MCF 10A (cell line): ENCODE measurements at regions of chr3 and their contacts with region 1.

Region 1: GRCh38 chr3:149752051-149752787 is at the start of gene COMMD2:
- DNase-seq: peak; percentile 91
- H3K4me3 Mint-ChIP-seq: peak within 1 kb of the TSS; percentile 84
- H3K27ac Mint-ChIP-seq: peak within 1 kb of the TSS; percentile 87
- H3K4me1 Mint-ChIP-seq: peaks cover 3% of the 10 kb centered on the region
- H3K27me3 Mint-ChIP-seq: no peaks in the 10 kb centered on the region
- CTCF ChIP-seq: peak; percentile 34
- total RNA-seq, gene COMMD2: 51.2 and 60.4 TPM in 2 replicates

Region 2: DNA sequence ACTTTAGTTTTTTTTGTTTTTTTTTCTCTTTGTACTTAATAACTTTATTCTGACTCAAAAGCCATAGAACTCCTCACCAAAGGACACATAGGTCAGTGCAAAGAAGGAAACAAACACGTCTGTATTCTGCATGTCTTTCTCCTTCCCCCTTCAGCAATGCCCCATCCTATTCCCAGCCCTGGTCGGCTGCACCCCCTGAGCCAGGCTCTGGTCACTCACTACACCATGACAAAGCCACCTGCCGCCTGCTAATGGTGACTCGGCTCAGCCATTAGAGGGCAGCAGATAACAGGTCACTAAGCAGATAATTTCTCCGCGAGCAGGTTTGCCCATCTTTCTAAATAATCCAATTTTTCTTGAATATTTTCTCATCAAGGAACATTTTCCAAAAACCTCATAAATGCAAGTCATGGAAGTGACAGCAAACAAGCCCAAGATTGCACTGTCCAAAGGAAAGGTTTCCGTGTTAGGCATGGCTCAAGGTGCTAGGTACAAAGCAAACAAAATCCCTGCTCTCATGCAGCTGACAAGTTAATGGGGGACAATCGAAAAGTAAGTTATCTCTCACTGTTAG is 239.9 kb before region 1 on chr3:
- CTCF ChIA-PET with region 1: interaction called, 3 read pairs
- POLR2A ChIA-PET with region 1: interaction called, 4 read pairs
- intact Hi-C with region 1: loop called (anchors 2 kb)
- DNase-seq: peak; percentile 67
- H3K4me3 Mint-ChIP-seq: no peak overlapping the region
- H3K27ac Mint-ChIP-seq: no peak overlapping the region
- H3K4me1 Mint-ChIP-seq: peaks cover 19% of the 10 kb centered on the region
- H3K27me3 Mint-ChIP-seq: no peaks in the 10 kb centered on the region
- CTCF ChIP-seq: peak; percentile 61

Region 3: GRCh38 chr3:149536429-149536828 is 215.8 kb before region 1 on chr3:
- CTCF ChIA-PET with region 1: interaction called, 16 read pairs
- POLR2A ChIA-PET with region 1: interaction called, 5 read pairs
- intact Hi-C with region 1: no loop called
- DNase-seq: peak; percentile 27
- H3K4me3 Mint-ChIP-seq: peak overlapping the region; percentile 31
- H3K27ac Mint-ChIP-seq: peak overlapping the region; percentile 67
- H3K4me1 Mint-ChIP-seq: peaks cover 48% of the 10 kb centered on the region
- H3K27me3 Mint-ChIP-seq: no peaks in the 10 kb centered on the region
- CTCF ChIP-seq: no peak

Region 4: DNA sequence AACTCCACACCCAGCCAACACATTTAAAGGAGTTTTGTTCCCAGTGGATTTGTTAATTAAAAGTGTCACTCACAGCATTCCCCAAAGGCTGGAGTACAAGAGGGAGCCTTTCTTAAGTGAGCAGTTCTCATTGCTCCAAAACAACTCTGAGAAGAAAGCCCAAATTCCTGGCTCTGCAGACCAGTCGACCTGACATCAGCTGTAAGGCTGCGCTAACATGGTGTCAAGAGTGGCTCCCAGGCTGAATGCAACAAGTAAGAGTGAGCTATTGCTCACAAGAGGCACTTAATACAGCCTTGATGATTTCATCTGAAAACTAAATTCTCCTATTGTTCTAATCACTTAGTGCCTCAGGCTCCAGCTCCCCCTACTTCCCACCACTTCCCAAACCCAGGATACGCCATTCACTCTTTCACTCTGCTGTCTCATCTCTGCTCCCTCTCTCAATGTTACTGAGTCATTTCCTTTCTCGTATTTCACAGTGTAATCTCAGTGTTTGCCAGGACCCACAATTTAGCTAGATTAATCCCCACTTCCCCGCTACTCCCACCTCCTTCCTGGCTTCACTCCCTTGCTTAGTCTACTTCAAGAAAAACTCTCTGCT is 176.2 kb before region 1 on chr3:
- CTCF ChIA-PET with region 1: interaction called, 4 read pairs
- POLR2A ChIA-PET with region 1: interaction called, 10 read pairs
- intact Hi-C with region 1: no loop called
- DNase-seq: peak; percentile 98
- H3K4me3 Mint-ChIP-seq: peak overlapping the region; percentile 55
- H3K27ac Mint-ChIP-seq: peak overlapping the region; percentile 77
- H3K4me1 Mint-ChIP-seq: peaks cover 66% of the 10 kb centered on the region
- H3K27me3 Mint-ChIP-seq: no peaks in the 10 kb centered on the region
- CTCF ChIP-seq: no peak

Region 5: GRCh38 chr3:149736175-149736952 is 15.9 kb before region 1 on chr3:
- CTCF ChIA-PET with region 1: interaction called, 10 read pairs
- POLR2A ChIA-PET with region 1: interaction called, 33 read pairs
- intact Hi-C with region 1: no loop called
- DNase-seq: peak; percentile 50
- H3K4me3 Mint-ChIP-seq: peak overlapping the region; percentile 46
- H3K27ac Mint-ChIP-seq: peak overlapping the region; percentile 76
- H3K4me1 Mint-ChIP-seq: peaks cover 16% of the 10 kb centered on the region
- H3K27me3 Mint-ChIP-seq: no peaks in the 10 kb centered on the region
- CTCF ChIP-seq: no peak

Region 6: GRCh38 chr3:149765762-149766334 is 13.6 kb after region 1 on chr3:
- CTCF ChIA-PET with region 1: interaction called, 29 read pairs
- POLR2A ChIA-PET with region 1: interaction called, 30 read pairs
- intact Hi-C with region 1: no loop called
- DNase-seq: peak; percentile 34
- H3K4me3 Mint-ChIP-seq: no peak overlapping the region
- H3K27ac Mint-ChIP-seq: no peak overlapping the region
- H3K4me1 Mint-ChIP-seq: no peaks in the 10 kb centered on the region
- H3K27me3 Mint-ChIP-seq: no peaks in the 10 kb centered on the region
- CTCF ChIP-seq: peak; percentile 49

Region 7: GRCh38 chr3:150158943-150159625 is 406.9 kb after region 1 on chr3:
- CTCF ChIA-PET with region 1: no interaction called
- POLR2A ChIA-PET with region 1: no interaction called
- intact Hi-C with region 1: no loop called
- DNase-seq: no peak
- H3K4me3 Mint-ChIP-seq: no peak overlapping the region
- H3K27ac Mint-ChIP-seq: no peak overlapping the region
- H3K4me1 Mint-ChIP-seq: peaks cover 6% of the 10 kb centered on the region
- H3K27me3 Mint-ChIP-seq: no peaks in the 10 kb centered on the region
- CTCF ChIP-seq: no peak